GM12878 (cell line): ENCODE measurements at regions of chr9 and their contacts with region 1.

Region 1: DNA sequence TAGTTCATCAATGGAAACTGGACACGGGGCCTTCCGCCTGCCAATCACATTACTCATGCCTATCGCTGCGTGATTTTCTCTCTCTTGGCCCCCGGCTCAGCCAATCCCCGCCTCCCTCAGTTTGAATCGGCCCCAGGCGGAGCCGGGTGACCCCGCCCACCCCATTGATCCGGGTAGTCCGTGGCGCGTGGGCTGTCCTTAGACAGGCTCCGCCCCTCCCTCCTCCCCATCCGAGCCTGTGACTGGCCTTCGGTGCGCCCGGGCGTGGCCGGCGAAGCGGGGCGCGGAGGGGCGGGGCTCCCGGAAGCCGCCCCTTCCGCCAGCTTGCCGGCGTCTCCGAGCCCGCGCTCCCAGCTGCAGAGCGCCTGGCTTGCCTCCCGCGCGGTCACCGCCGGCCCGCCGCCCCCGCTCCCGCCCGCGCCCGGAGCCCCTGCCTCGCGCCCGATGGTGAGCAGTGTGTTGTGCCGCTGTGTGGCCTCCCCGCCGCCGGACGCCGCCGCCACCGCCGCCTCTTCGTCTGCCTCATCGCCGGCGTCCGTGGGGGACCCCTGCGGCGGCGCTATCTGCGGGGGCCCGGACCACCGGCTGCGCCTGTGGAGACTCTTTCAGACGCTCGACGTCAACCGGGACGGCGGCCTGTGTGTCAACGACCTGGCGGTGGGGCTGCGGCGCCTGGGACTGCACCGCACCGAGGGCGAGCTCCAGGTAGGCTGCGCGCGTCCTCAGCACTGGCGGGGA is at the start of gene SLC25A25:
- DNase-seq: peak; percentile 96
- ATAC-seq: peak; percentile 81
- H3K4me3 ChIP-seq: peak within 1 kb of the TSS; percentile 90
- H3K27ac ChIP-seq: peak within 1 kb of the TSS; percentile 99
- H3K4me1 ChIP-seq: peaks cover 30% of the 10 kb centered on the region
- H3K27me3 ChIP-seq: no peaks in the 10 kb centered on the region
- CTCF ChIP-seq: 0 out of 6 replicates have a peak, but pooled peaks of 1 of the 3 experiments have one; percentile 3
- EP300 ChIP-seq: no peak
- POLR2A ChIP-seq: peak; percentile 86
- RAD21 ChIP-seq: no peak
- polyA plus RNA-seq, gene SLC25A25: 0.04 TPM in 1 of 2 experiments, not detected in the other

Region 2: GRCh38 chr9:128034821-128035764 is 33.0 kb before region 1 on chr9:
- CTCF ChIA-PET with region 1: interaction called, 20 read pairs
- POLR2A ChIA-PET with region 1: no interaction called
- RAD21 ChIA-PET with region 1: interaction called, 11 read pairs
- SMC1A ChIA-PET with region 1: interaction called, 9 read pairs
- in situ Hi-C with region 1: no loop called
- intact Hi-C with region 1: no loop called
- DNase-seq: peak; percentile 60
- ATAC-seq: peak; percentile 82
- H3K4me3 ChIP-seq: no peak overlapping the region
- H3K27ac ChIP-seq: no peak overlapping the region
- H3K4me1 ChIP-seq: peaks cover 42% of the 10 kb centered on the region
- H3K27me3 ChIP-seq: no peaks in the 10 kb centered on the region
- CTCF ChIP-seq: peak; percentile 82 to 91 (median 91); a peak in 5 of 6 replicates
- EP300 ChIP-seq: no peak
- POLR2A ChIP-seq: no peak
- RAD21 ChIP-seq: peak; percentile 98

Region 3: GRCh38 chr9:128081056-128081455 is 13.0 kb after region 1 on chr9:
- CTCF ChIA-PET with region 1: interaction called, 33 read pairs
- POLR2A ChIA-PET with region 1: interaction called, 13 read pairs
- RAD21 ChIA-PET with region 1: interaction called, 8 read pairs
- SMC1A ChIA-PET with region 1: interaction called, 14 read pairs
- in situ Hi-C with region 1: no loop called
- intact Hi-C with region 1: no loop called
- DNase-seq: no peak
- ATAC-seq: peak; percentile 37; the same call in 1 of the 3 replicates
- H3K4me3 ChIP-seq: no peak overlapping the region
- H3K27ac ChIP-seq: peak overlapping the region; percentile 16
- H3K4me1 ChIP-seq: peaks cover 30% of the 10 kb centered on the region
- H3K27me3 ChIP-seq: no peaks in the 10 kb centered on the region
- CTCF ChIP-seq: no peak
- EP300 ChIP-seq: no peak
- POLR2A ChIP-seq: no peak
- RAD21 ChIP-seq: no peak

Region 4: GRCh38 chr9:128117613-128118471 is 49.8 kb after region 1 on chr9:
- CTCF ChIA-PET with region 1: interaction called, 16 read pairs
- POLR2A ChIA-PET with region 1: interaction called, 6 read pairs
- RAD21 ChIA-PET with region 1: interaction called, 4 read pairs
- SMC1A ChIA-PET with region 1: interaction called, 10 read pairs
- in situ Hi-C with region 1: no loop called
- intact Hi-C with region 1: no loop called
- DNase-seq: no peak
- ATAC-seq: peak; percentile 79
- H3K4me3 ChIP-seq: no peak overlapping the region
- H3K27ac ChIP-seq: no peak overlapping the region
- H3K4me1 ChIP-seq: peaks cover 23% of the 10 kb centered on the region
- H3K27me3 ChIP-seq: no peaks in the 10 kb centered on the region
- CTCF ChIP-seq: peak; percentile 100; a peak in 5 of 6 replicates
- EP300 ChIP-seq: no peak
- POLR2A ChIP-seq: peak; percentile 65
- RAD21 ChIP-seq: peak; percentile 99

Region 5: GRCh38 chr9:128266868-128267590 is 199.0 kb after region 1 on chr9:
- CTCF ChIA-PET with region 1: no interaction called
- POLR2A ChIA-PET with region 1: no interaction called
- RAD21 ChIA-PET with region 1: no interaction called
- SMC1A ChIA-PET with region 1: no interaction called
- in situ Hi-C with region 1: no loop called
- intact Hi-C with region 1: no loop called
- DNase-seq: no peak
- ATAC-seq: no peak
- H3K4me3 ChIP-seq: no peak overlapping the region
- H3K27ac ChIP-seq: no peak overlapping the region
- H3K4me1 ChIP-seq: no peaks in the 10 kb centered on the region
- H3K27me3 ChIP-seq: no peaks in the 10 kb centered on the region
- CTCF ChIP-seq: no peak
- EP300 ChIP-seq: no peak
- POLR2A ChIP-seq: no peak
- RAD21 ChIP-seq: no peak